Activated CD4-positive, alpha-beta memory T cell treated with anti-CD3 and anti-CD28 coated beads, Interleukin-2, amount 10 ng/mL, durations not matched to agents 7 days and 5 days (primary cell): ENCODE measurements at regions of chr10 and their contacts with region 1.

Region 1: GRCh38 chr10:91944880-91945630 is 21.5 kb downstream of the BTAF1 start:
- DNase-seq: no peak
- H3K4me3 Mint-ChIP-seq: peak overlapping the region; percentile 23
- H3K27ac Mint-ChIP-seq: peak overlapping the region; percentile 61
- H3K4me1 Mint-ChIP-seq: peaks cover 27% of the 10 kb centered on the region
- H3K27me3 Mint-ChIP-seq: no peaks in the 10 kb centered on the region

Region 2: GRCh38 chr10:91864099-91864498 is 81.0 kb before region 1 on chr10:
- CTCF ChIA-PET with region 1: no interaction called
- POLR2A ChIA-PET with region 1: no interaction called
- DNase-seq: no peak
- H3K4me3 Mint-ChIP-seq: no peak overlapping the region
- H3K27ac Mint-ChIP-seq: no peak overlapping the region
- H3K4me1 Mint-ChIP-seq: no peaks in the 10 kb centered on the region
- H3K27me3 Mint-ChIP-seq: no peaks in the 10 kb centered on the region

Region 3: GRCh38 chr10:91923371-91924211 is 21.5 kb before region 1 on chr10 and contains the start of gene BTAF1:
- CTCF ChIA-PET with region 1: interaction called, 8 read pairs
- POLR2A ChIA-PET with region 1: interaction called, 20 read pairs
- DNase-seq: peak; percentile 92
- H3K4me3 Mint-ChIP-seq: peak within 1 kb of the TSS; percentile 94
- H3K27ac Mint-ChIP-seq: peak within 1 kb of the TSS; percentile 96
- H3K4me1 Mint-ChIP-seq: peaks cover 45% of the 10 kb centered on the region
- H3K27me3 Mint-ChIP-seq: peaks cover 2% of the 10 kb centered on the region
- total RNA-seq, gene BTAF1: 51.3 to 54.9 TPM